ENCODE measurements at regions of chr21 and their contacts with region 1.

Region 1: DNA sequence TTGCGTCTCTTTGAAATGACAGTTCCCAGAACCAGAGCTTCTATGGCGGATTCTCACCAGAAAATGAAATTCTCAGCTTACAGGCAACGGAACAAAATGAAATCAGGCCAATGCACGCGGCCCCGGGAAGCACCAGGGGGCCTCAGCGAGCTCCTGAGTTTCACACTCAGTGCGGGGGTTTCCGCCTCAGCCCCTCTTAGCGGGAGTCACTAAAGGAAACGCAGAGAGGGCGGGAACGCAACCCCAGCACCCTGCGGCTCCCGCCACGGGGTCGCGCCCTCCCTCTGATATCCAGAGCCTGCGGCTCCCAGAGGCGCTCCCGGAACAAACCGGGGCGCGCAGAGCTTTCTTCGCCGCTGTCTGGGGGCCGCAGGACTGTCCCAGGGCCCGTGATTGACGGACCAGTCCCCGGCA is 7.9 kb upstream of the COL6A1 start:
- DNase-seq: peak; percentile 91
- ATAC-seq: peak; percentile 27

Region 2: GRCh38 chr21:45774291-45774690 is 199.4 kb before region 1 on chr21:
- intact Hi-C with region 1: no loop called
- DNase-seq: no peak
- ATAC-seq: no peak

Region 3: DNA sequence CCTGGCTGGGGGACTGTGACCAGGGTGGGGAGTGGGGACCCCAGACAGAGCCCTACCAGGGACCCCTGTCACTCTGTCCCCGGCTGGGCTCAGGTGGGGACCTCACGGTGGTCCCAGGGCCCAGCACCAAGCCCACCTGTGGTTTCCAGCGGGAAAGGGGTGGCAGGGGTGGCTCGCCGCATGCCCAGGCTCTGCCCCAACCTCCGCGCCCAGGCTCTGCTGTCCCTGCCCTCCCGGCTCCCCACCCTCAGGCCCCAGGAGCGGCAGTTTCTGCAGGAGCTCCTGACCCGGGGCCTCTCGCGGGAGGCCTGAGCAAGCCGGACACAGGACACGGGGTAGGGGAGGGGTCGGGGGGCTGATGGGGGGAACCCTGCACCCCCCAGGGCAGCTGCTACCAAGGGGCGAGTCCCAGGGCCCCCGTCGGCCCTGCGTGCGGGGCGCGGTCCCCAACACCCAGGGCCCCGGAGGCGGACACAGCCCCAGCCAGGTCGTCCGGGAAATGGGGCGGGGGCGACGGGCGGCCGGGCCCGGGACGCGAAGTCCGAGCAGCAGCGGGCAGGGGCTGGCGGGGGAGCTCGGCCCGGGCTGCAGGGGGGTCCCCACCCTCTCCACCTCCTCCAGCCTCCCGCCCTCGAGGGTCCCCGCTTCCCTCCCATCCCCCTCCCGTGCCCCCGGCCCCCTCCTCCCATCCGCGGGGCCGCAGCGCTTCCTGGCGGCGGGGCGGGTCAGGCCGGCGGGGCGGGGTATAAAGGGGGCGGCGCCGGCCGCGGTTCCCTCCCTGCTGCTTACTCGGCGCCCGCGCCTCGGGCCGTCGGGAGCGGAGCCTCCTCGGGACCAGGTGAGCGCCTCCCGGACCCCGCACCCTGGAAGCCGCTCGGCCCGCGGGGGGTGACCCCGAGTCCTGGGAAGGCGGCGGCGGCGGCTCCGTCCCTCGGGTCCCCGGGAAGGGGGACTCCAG is 123.9 kb after region 1 on chr21 and contains the start of gene COL6A2:
- intact Hi-C with region 1: loop called (anchors 5 kb)
- DNase-seq: peak; percentile 84
- ATAC-seq: peak; percentile 76
- total RNA-seq, gene COL6A2: 397 TPM

Region 4: DNA sequence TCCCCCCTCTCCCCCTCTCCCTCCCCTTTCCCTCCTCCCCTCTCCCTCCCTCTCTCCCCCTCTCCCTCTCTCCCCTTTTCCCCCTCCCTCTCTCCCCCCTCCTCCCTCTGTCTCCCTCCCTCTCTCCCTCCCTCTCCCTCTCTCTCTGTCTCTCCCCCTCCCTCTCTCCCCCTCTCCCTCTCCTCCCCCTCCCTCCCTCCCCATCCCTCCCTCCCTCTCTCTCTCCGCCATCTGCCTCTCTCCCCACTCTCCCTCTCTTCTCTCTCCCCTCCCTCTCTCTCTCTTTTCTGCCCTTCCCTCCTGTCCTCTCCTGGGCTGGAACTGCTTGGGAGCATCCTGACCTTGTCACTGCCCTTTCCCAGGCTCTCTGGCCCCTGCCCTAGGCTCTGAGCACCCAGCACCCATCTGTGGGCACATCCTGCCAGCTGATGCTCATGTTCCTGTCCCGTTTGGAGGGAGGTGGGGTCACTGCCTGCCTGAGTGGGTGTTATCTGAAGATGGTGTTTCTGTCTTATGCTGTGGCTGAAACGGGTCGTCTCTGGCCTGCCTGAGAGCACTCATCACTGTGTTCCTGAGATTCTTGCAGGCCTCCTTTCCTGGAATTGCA is 170.9 kb after region 1 on chr21:
- intact Hi-C with region 1: no loop called
- DNase-seq: peak; percentile 47
- ATAC-seq: no peak

Measured in sciatic nerve (tissue), 2 donors.